ENCODE measurements at regions of chr10 and their contacts with region 1.

Region 1: GRCh38 chr10:33330543-33331378 is 3.7 kb downstream of the NRP1 start:
- DNase-seq: peak; percentile 63 to 86
- ATAC-seq: peak; percentile 76 to 79 (median 78)
- H3K4me3 ChIP-seq: no peak overlapping the region
- H3K4me3 Mint-ChIP-seq: no peak overlapping the region
- H3K27ac ChIP-seq: no peak overlapping the region
- H3K27ac Mint-ChIP-seq: no peak overlapping the region
- H3K4me1 ChIP-seq: peaks cover 20% of the 10 kb centered on the region
- H3K4me1 Mint-ChIP-seq: peaks cover 9 to 19% of the 10 kb centered on the region in 2 donors
- H3K27me3 ChIP-seq: peaks cover 36% of the 10 kb centered on the region
- H3K27me3 Mint-ChIP-seq: peaks cover 47 to 76% of the 10 kb centered on the region in 2 donors
- CTCF ChIP-seq: peak; percentile 93

Region 2: DNA sequence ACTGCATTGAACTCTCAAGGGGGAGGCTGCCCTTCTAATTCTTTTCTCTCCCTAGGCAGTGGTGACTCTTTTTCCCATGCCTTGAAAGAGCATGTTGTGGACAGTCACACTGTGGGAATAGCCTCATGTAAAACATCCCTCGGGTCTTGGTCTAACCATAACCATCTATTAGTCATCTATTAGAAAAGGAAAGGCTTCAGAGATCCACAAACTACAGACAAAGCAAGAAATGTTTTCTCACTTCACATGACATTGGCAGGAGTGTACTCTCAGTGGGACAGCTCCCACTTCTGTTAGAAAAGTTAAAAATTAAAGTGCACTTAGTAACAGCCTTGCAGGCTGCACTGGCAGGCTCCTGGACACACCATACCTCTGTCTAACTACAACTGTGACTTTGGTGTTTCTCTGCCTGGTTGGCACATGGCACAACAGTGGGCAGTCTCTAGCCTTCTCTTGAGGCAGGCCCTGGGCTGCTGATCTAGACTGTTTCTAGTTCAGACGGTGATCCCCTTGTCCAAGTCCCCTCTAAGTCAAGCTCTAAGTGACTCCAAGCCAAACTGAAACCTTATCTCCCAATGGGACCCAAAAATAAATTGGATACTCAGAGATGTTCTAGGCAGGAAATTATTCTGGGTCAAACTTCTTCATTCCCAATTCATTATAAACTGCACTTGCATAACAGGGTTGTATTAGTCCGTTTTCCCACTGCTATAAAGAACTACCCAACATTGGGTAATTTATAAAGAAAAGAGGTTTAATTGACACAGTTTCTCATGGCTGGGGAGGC is 314.8 kb before region 1 on chr10:
- intact Hi-C with region 1: no loop called
- DNase-seq: no peak
- ATAC-seq: peak in 1 of 3 donors; percentile 24
- H3K4me3 ChIP-seq: no peak overlapping the region
- H3K4me3 Mint-ChIP-seq: no peak overlapping the region
- H3K27ac ChIP-seq: no peak overlapping the region
- H3K27ac Mint-ChIP-seq: no peak overlapping the region
- H3K4me1 ChIP-seq: peaks cover 4% of the 10 kb centered on the region
- H3K4me1 Mint-ChIP-seq: peaks cover 13 to 14% of the 10 kb centered on the region in 2 donors
- H3K27me3 ChIP-seq: no peaks in the 10 kb centered on the region
- H3K27me3 Mint-ChIP-seq: no peaks in the 10 kb centered on the region
- CTCF ChIP-seq: no peak

Region 3: GRCh38 chr10:33193057-33193700 is 137.6 kb before region 1 on chr10:
- intact Hi-C with region 1: loop called (anchors 10 kb)
- DNase-seq: peak; percentile 44 to 82
- ATAC-seq: peak; percentile 64 to 93 (median 88)
- H3K4me3 ChIP-seq: no peak overlapping the region
- H3K4me3 Mint-ChIP-seq: no peak overlapping the region
- H3K27ac ChIP-seq: no peak overlapping the region
- H3K27ac Mint-ChIP-seq: no peak overlapping the region
- H3K4me1 ChIP-seq: no peaks in the 10 kb centered on the region
- H3K4me1 Mint-ChIP-seq: no peaks in the 10 kb centered on the region
- H3K27me3 ChIP-seq: no peaks in the 10 kb centered on the region
- H3K27me3 Mint-ChIP-seq: peaks cover 17 to 30% of the 10 kb centered on the region in 2 donors
- CTCF ChIP-seq: peak; percentile 65